CD8-positive, alpha-beta T cell (primary cell): ENCODE measurements at regions of chr1 and their contacts with region 1.

Region 1: DNA sequence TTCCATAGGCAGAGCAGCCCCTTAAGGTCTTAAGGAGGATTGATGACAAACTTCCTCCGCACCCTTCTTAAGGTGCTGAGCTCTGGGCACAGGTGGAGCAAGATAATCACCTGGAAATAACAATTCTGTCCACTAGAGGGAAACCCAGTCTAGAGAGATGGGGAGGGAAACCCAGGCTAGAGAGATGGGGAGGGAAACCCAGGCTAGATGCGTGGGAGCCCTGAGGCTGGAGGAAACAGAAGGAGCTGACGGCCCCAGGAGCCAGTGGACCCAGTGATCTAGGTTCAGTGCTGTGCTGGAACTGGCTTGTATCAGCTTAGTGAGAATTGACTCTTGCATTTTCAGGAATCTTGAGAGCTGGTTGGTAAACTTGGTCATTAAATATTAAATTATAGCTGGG is 17.8 kb upstream of the MYCL start:
- DNase-seq: peak in 8 of 9 experiments; percentile 13 to 79 (median 28)
- ATAC-seq: peak; percentile 100
- H3K4me3 ChIP-seq: no peak overlapping the region
- H3K4me3 Mint-ChIP-seq: no peak overlapping the region
- H3K27ac ChIP-seq: no peak overlapping the region
- H3K27ac Mint-ChIP-seq: no peak overlapping the region
- H3K4me1 ChIP-seq: no peaks in the 10 kb centered on the region
- H3K4me1 Mint-ChIP-seq: peaks cover 2% of the 10 kb centered on the region
- H3K27me3 ChIP-seq: no peaks in the 10 kb centered on the region
- H3K27me3 Mint-ChIP-seq: peaks cover 2% of the 10 kb centered on the region
- CTCF ChIP-seq: peak; percentile 67

Region 2: DNA sequence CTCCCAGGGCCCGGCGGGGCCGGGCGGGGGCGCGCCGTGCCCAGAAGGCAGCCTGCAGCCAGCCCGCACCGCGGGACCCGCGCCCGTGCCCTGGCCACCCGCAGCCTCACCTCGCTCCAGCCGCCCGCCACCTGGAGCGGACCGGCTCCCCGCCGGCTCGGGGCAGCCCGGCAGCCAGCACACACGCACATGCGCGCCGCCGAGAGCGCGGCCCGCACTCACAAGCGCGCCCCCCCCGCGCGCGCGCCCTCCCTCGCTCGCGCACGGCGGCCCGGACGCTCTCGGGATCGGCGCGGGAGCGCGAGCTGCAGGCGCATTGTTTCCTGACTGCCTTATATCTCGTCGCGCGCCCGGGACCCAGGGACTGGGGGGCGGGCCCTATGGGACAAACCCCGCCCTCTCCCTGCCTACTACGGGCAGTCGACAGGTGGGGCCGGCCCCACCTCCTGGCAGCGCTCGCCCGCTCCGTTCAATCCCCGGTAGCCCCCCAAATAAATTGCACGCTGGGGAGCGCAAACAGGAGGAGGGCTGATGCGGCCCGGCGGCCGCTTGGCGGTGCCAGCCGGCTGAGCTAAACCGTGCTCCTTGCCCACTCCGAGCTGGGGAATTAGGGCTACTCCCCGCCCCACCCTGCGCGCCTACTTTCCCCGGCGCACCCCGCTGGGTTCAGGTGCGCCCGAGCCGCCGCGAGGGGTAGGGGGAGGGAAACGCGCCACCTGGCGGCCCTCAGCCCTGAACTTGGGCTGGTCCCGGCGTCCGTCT is 17.7 kb before region 1 on chr1 and contains the start of gene MYCL:
- CTCF ChIA-PET with region 1: interaction called, 13 read pairs
- POLR2A ChIA-PET with region 1: interaction called, 8 read pairs
- intact Hi-C with region 1: no loop called
- DNase-seq: peak; percentile 25 to 80 (median 69)
- ATAC-seq: peak; percentile 81
- H3K4me3 ChIP-seq: peak within 1 kb of the TSS; percentile 61 to 66
- H3K4me3 Mint-ChIP-seq: peak within 1 kb of the TSS; percentile 77
- H3K27ac ChIP-seq: no peak within 1 kb of the TSS
- H3K27ac Mint-ChIP-seq: no peak within 1 kb of the TSS
- H3K4me1 ChIP-seq: peaks cover 4% of the 10 kb centered on the region
- H3K4me1 Mint-ChIP-seq: peaks cover 7% of the 10 kb centered on the region
- H3K27me3 ChIP-seq: peaks cover 18 to 21% of the 10 kb centered on the region in 2 experiments
- H3K27me3 Mint-ChIP-seq: peaks cover 54% of the 10 kb centered on the region
- CTCF ChIP-seq: peak; percentile 63
- total RNA-seq, gene MYCL: 0.22 TPM in 1 of 2 experiments, not detected in the other

Region 3: DNA sequence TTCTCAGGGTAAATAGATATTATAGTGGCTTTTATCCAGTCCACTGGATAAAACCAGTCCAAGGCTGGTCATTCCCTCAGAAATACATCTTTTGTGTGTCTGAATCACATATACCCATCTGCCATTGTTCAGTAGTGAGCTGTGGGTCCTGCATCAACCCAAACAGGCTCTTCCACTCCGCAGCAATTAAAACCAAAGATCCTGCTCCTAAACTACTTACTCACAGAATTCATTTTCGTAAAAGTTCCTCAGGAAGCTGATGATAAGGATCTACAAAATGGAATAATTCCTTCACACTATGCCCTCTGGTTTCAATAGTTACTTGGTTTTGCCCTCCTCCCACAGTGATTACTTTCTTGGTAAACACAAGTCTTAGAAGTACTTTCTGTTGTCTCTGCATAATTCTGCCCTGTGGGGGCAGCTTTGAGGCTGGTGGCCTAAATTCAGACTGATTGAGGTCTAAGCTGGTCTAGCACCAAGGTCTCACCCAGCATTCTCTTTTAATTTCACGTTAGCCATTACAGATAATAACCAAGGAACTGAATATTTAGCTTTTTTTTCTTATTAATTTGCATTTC is 30.4 kb after region 1 on chr1:
- CTCF ChIA-PET with region 1: interaction called, 14 read pairs
- POLR2A ChIA-PET with region 1: no interaction called
- intact Hi-C with region 1: no loop called
- DNase-seq: no peak
- ATAC-seq: no peak
- H3K4me3 ChIP-seq: no peak overlapping the region
- H3K4me3 Mint-ChIP-seq: no peak overlapping the region
- H3K27ac ChIP-seq: no peak overlapping the region
- H3K27ac Mint-ChIP-seq: no peak overlapping the region
- H3K4me1 ChIP-seq: peaks cover 5% of the 10 kb centered on the region
- H3K4me1 Mint-ChIP-seq: peaks cover 5% of the 10 kb centered on the region
- H3K27me3 ChIP-seq: no peaks in the 10 kb centered on the region
- H3K27me3 Mint-ChIP-seq: peaks cover 5% of the 10 kb centered on the region
- CTCF ChIP-seq: no peak

Region 4: DNA sequence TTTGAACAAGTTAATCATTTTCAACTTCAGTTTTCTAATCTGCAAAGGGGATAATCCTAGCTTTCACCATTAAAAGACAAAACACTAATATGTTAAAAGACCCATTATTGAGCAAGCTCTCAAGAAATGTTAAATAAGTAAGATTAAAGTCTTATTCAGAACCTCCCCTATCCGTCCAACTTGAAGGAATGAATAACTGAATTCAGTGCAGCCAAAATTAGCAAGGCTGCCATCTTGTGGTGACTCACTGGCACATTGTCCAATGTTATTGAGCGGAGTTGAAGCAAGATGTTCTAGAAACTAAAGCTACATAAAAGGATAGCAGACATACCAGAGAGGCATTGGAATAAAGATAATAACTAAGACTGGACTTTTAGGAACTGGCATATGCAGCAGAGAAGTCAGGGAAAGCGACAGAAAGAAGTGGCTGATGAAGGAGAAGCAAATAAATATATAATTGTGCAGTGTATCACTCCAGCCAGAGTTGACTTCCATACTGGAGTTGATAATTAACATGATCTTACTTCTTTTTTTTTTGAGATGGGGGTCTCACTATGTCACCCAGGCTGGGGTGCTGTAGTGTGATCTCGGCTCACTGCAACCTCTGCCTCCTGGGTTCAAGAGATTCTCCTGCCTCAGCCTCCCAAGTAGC is 112.8 kb after region 1 on chr1:
- CTCF ChIA-PET with region 1: interaction called, 117 read pairs
- POLR2A ChIA-PET with region 1: interaction called, 4 read pairs
- intact Hi-C with region 1: loop called in 1 of 2 experiments (anchors 1 kb)
- DNase-seq: peak; percentile 15 to 77 (median 60)
- ATAC-seq: peak; percentile 67
- H3K4me3 ChIP-seq: no peak overlapping the region
- H3K4me3 Mint-ChIP-seq: no peak overlapping the region
- H3K27ac ChIP-seq: no peak overlapping the region
- H3K27ac Mint-ChIP-seq: peak overlapping the region; percentile 8
- H3K4me1 ChIP-seq: peaks cover 45% of the 10 kb centered on the region
- H3K4me1 Mint-ChIP-seq: peaks cover 49% of the 10 kb centered on the region
- H3K27me3 ChIP-seq: no peaks in the 10 kb centered on the region
- H3K27me3 Mint-ChIP-seq: no peaks in the 10 kb centered on the region
- CTCF ChIP-seq: peak; percentile 47